Cardiac septum (tissue), 1 donor: ENCODE measurements at regions of chr12 and their contacts with region 1.

Region 1: GRCh38 chr12:90773491-90773890 is 181.5 kb downstream of the CCER1 start:
- DNase-seq: no peak

Region 2: DNA sequence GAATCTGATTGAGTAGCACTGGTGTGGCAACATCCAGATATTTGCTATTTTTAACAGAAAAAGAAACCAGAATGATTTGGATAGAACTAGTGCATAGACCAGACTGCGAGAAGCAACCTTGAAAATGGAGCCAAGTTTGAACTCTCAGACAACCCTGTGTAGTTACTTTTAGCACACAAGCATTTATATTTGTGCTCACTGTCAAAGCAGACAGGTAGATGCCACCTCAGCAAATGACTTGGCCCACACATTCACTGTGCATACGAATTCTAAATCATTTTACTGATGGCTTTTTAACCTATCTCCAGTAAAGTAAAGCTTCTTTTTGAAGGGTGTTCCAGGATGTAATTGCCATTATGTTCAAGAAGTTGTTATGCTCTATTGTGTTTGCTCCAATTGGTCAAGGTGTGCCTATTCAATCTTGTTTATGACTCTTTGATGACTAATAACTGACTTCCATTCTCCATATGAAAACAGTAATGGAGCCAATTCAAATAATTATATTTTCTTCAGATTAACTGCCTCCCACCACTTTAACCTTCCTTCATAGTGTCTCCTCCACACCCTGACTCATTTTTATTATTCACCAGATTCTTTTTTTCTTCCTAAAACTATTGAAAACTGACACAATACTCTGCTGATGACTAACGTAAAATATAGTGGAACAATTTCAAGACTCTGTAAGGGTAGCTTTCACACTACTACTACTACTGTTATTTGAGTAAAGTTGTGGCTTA is 43.0 kb after region 1 on chr12:
- intact Hi-C with region 1: loop called (anchors 10 kb)
- DNase-seq: no peak

Region 3: GRCh38 chr12:90888316-90888715 is 114.8 kb after region 1 on chr12:
- intact Hi-C with region 1: no loop called
- DNase-seq: no peak

Region 4: DNA sequence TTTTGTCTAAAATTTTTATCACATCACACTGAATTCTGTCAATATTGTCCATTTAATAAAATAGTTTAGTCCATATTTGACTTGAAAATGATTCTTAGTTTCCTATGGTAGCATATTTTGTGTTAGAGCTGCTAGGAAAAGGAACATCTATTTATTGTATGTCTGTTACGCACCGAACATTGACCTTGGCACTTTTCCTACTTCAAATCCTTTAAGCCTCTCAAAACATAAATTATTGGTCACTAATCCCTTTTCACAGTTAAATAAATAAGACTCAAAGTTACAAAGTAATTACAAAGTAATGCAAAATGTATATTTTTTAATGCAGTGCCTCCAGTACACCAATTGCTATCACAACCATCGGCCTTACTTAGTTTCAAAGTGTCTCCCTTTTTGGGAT is 380.6 kb after region 1 on chr12:
- intact Hi-C with region 1: no loop called
- DNase-seq: no peak